ENCODE measurements at regions of chr10 and their contacts with region 1.

Region 1: DNA sequence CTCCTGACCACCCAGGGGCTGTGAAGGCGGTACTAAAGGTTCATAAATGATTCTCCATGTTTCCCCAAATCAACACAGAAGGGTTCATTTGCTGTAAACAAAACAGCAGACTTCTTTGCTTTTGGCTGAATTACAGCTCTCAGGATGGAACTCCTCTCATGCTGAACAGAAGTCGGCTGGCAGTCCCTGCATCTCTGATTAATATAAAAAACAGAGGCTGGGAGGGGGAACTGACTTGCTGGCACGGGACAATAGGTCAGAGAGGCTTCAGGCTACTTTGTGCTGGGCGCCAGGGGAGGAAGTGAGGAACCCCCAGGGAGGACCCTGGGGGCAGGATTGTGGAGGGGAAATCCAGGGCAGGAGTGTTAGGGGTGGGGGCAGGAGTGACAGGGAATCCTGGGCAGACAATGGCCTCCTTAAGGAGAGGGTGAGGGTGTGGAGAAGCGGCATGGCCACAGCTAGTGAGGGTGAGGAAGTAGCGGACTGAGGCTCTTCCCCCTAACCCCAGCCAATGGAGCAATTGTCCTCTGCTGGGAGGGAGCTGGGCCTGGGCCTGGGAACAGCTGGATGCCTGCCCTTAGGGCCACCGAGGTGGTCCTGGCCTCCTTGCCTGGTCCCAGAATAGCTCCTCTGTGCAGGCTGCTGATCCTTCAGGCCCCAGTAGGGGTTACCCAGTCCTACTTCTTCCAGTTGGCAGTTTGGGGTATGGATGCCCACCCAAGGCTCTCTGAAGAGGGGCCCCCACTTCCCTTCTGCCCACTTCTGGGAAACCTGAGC is 9.2 kb upstream of the SFRP5 start:
- DNase-seq: no peak
- CTCF ChIP-seq: no peak

Region 2: GRCh38 chr10:97708976-97709946 is 71.8 kb before region 1 on chr10:
- CTCF ChIA-PET with region 1: no interaction called
- POLR2A ChIA-PET with region 1: no interaction called
- DNase-seq: no peak
- CTCF ChIP-seq: peak; percentile 70

Region 3: DNA sequence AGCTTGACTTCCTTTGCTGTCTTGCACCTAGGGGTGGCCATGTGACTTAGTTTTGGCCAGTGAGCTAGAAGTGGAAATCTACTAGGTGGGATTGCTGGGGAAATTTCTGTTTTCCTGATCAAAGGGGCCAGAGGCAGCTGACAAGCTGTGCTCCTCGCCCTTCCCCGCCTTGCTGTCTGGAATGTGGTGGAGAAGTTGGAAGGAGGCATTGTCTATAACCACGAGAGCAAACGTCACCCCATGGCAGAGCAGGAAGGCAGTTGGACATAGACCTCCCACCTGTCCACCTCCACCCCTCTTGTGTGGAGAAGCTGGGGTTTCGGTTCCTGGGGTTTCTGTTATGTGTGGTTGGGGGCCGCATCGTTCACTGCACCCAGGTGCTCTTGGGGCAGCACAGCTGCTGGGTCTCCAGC is 16.5 kb before region 1 on chr10:
- CTCF ChIA-PET with region 1: no interaction called
- POLR2A ChIA-PET with region 1: no interaction called
- DNase-seq: no peak
- CTCF ChIP-seq: no peak

Region 4: DNA sequence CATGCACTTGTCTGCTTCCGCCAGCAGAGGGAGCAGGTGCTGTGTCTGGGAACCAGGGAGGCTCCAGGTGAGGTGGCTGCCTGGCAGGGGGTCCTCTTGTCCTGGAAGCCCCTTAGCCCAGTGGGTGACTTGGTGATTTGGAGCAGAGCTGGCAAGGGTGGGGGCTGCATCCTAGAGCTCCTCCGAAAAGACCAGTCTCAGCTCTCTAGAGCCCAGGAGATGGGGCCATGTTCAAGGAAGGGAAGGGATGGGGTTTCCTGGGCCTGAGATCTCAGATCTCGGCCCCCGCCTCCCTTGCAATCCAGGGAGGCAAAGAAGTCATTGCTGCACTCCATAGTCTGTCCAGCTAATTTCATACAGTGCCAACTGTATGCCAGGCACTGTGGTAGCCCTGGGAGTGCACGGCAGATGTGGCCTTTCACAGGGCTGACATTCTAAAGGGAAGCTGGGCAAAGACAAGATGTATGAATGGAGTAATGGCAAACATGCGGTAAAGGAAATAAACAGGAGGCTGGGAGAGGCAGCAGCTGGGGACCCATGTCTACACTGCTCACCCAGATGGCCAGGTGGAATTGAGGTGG is 11.2 kb after region 1 on chr10:
- CTCF ChIA-PET with region 1: interaction called, 21 read pairs
- POLR2A ChIA-PET with region 1: no interaction called
- DNase-seq: peak; percentile 82
- CTCF ChIP-seq: peak; percentile 92